WTC11 (cell line): ENCODE measurements at regions of chr4 and their contacts with region 1.

Region 1: GRCh38 chr4:1746265-1746691 is 25.0 kb downstream of the TACC3 start:
- DNase-seq: peak; percentile 98
- ATAC-seq: peak; percentile 87
- H3K4me3 Mint-ChIP-seq: no peak overlapping the region
- H3K27ac Mint-ChIP-seq: no peak overlapping the region
- H3K4me1 Mint-ChIP-seq: no peaks in the 10 kb centered on the region
- H3K27me3 Mint-ChIP-seq: peaks cover 2% of the 10 kb centered on the region; the same call in 1 of the 2 replicates
- CTCF ChIP-seq: peak; percentile 88

Region 2: DNA sequence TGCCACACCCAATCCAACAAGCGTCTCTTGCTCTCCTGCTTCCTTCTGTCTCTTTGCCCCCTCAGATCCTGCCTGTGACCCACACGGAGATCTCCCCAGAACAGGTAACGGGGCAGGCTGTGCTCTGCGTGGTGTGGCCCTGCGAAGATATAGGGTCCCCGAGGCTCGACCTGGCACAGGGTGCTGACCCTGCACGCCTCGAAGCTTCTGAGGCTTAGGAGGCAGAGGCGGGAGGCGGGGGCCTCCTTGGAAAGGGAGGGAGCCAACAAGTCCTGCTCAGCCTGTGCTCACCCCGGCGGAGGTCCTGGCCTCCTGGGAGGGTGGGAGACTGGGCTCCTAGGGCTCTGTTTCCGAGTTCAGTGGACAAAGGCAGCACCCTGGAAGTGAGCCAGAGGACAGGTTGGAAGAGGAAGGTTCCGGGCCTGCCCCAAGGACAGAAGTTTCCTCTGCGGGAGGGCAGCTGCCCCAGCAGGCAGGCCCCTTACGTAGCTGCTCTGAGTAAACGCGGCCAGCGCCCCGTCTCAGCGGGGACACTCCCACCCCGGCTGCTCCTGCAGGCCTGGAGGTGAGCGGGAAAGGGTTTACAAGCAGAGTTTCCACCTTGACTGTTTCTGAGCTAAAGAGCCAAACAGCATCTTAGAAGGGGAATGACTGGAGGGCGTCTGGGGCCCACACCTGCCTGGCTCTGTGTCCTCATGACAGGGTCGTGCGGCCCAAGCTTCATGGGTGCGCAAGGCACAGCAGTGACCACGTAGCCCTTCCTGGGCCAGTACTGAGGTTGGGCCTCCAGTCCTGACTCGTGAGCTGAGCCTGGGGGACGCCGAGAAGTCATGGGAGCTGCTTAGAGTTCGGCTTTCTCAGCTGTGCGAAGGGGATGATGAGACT is 798.0 kb before region 1 on chr4:
- CTCF ChIA-PET with region 1: no interaction called
- POLR2A ChIA-PET with region 1: no interaction called
- DNase-seq: no peak
- ATAC-seq: no peak
- H3K4me3 Mint-ChIP-seq: no peak overlapping the region
- H3K27ac Mint-ChIP-seq: peak overlapping the region; percentile 62
- H3K4me1 Mint-ChIP-seq: peaks cover 13% of the 10 kb centered on the region
- H3K27me3 Mint-ChIP-seq: peaks cover 26% of the 10 kb centered on the region
- CTCF ChIP-seq: no peak

Region 3: GRCh38 chr4:1693129-1693896 is 53.0 kb before region 1 on chr4:
- CTCF ChIA-PET with region 1: interaction called, 13 read pairs
- POLR2A ChIA-PET with region 1: no interaction called
- DNase-seq: peak; percentile 77
- ATAC-seq: peak; percentile 87
- H3K4me3 Mint-ChIP-seq: no peak overlapping the region
- H3K27ac Mint-ChIP-seq: peak overlapping the region; percentile 66; the same call in 1 of the 2 replicates
- H3K4me1 Mint-ChIP-seq: no peaks in the 10 kb centered on the region
- H3K27me3 Mint-ChIP-seq: no peaks in the 10 kb centered on the region
- CTCF ChIP-seq: peak; percentile 94

Region 4: DNA sequence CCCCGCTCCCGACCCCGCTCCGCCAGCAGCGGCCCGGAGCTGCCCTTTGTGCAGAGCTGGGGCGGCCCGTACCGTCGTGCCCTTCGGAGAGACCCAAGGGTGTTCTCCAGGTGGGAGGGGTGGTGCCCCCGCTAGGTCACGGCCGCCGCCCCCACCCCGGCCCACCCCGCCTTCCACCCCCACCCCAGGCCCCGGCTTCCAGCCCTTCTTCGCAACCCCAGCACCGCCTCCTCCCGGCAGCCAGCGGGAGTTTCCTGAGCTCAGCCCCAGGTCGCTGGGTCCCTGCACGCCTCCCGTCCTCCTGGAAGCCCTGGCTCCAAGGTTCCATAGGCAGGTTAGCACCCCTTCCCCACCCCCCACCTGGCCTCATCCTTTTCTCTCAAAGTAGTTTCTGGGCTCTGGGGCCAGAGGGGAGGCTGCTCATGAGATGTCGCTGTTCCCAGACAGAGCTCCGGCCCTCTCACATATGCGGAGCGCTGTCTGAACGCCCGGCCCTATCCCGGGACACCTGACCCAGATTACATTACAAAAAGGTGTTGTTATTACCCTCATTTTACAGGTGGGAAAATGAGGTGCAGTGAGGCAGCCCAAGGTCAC is 21.6 kb after region 1 on chr4:
- CTCF ChIA-PET with region 1: interaction called, 62 read pairs
- POLR2A ChIA-PET with region 1: interaction called, 3 read pairs
- DNase-seq: peak; percentile 81
- ATAC-seq: peak; percentile 60
- H3K4me3 Mint-ChIP-seq: peak overlapping the region; percentile 59
- H3K27ac Mint-ChIP-seq: no peak overlapping the region
- H3K4me1 Mint-ChIP-seq: peaks cover 13% of the 10 kb centered on the region
- H3K27me3 Mint-ChIP-seq: peaks cover 4% of the 10 kb centered on the region
- CTCF ChIP-seq: no peak

Region 5: DNA sequence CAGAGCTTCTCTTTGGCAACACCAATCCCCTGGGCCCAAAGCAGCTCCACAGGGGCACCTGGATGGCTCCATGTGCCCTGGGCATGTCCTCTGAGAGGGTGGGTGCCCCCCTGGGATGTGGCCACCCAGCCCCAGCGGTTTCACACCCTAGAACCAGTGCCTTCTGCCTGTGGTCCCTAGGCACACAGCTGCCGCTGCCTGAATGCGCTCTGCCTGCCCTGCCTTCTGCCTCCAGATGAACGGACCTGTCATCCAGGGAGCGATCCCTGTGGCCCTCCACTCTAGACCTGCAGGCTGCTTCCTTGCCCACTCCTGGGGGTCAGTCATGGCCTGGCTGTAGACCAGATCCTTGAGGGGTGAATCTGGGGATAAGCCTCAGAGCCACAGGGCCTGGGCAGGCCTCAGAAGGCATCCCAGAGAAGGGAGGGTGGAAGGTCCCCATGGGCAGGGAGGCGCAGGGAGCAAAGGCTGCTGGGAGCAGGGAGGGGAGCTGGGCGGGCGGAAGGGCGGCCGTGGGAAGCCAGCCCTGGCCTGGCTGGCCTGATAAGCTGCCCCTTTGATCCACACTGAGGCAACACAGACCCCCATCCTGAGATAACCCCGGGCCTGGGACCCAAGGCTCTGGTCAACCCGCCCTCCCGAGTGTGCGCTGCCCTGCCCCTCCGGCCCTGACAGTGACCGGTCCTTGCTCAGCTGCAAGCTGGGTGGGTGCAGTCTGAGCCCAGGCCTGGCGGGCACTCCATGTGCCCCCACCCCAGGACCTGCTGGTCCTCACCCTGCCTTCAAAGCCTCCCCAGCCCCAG is 38.7 kb after region 1 on chr4:
- CTCF ChIA-PET with region 1: interaction called, 115 read pairs
- POLR2A ChIA-PET with region 1: interaction called, 3 read pairs
- DNase-seq: no peak
- ATAC-seq: no peak
- H3K4me3 Mint-ChIP-seq: no peak overlapping the region
- H3K27ac Mint-ChIP-seq: no peak overlapping the region
- H3K4me1 Mint-ChIP-seq: peaks cover 3% of the 10 kb centered on the region; the same call in 1 of the 2 replicates
- H3K27me3 Mint-ChIP-seq: peaks cover under 1% of the 10 kb centered on the region; the same call in 1 of the 2 replicates
- CTCF ChIP-seq: no peak

Region 6: GRCh38 chr4:1842993-1843448 is 96.7 kb after region 1 on chr4:
- CTCF ChIA-PET with region 1: interaction called, 14 read pairs
- POLR2A ChIA-PET with region 1: no interaction called
- DNase-seq: no peak
- ATAC-seq: no peak
- H3K4me3 Mint-ChIP-seq: no peak overlapping the region
- H3K27ac Mint-ChIP-seq: no peak overlapping the region
- H3K4me1 Mint-ChIP-seq: no peaks in the 10 kb centered on the region
- H3K27me3 Mint-ChIP-seq: no peaks in the 10 kb centered on the region
- CTCF ChIP-seq: no peak